ENCODE measurements at regions of chr17 and their contacts with region 1.

Region 1: DNA sequence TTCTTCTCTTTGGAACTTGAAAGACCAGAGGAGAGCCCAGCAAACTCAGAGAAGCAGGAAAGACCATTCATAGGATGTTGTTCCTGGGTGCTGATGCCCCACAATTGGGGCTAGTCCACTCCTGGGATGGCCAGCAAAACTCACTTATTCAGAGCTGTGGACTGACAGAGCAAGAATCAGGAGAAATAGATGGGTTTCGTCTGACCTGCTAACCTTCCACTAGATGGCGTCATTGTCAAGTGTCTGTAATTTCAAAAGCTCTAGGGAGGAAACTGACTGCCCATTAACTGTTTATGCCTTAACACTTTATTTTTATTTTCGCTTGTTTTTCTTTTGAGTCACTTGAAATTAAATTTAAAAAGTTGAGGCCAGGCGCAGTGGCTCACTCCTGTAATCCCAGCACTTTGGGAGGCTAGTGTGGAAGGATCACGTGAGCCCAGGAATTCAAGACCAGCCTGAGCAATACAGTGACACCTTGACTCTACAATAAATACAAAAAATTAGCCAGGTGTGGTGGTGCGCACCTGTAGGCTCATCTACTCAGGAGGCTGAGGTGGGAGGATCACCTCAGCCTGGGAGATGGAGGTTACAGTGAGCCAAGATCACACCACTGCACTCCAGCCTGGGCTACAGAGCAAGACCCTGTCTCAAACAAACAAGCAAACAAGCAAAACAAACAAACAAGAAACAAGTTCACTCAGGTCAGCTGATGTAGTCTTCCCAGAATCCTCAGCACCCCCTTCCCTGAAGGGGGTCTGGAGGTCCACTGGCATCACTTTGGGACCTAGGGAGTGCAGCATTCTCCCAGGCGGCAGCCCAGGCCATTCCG is 28.6 kb upstream of the MILR1 start:
- DNase-seq: peak; percentile 46
- ATAC-seq: peak; percentile 81
- H3K4me3 Mint-ChIP-seq: no peak overlapping the region
- H3K27ac Mint-ChIP-seq: no peak overlapping the region
- H3K4me1 Mint-ChIP-seq: peaks cover 9% of the 10 kb centered on the region
- H3K27me3 Mint-ChIP-seq: peaks cover 11% of the 10 kb centered on the region

Region 2: DNA sequence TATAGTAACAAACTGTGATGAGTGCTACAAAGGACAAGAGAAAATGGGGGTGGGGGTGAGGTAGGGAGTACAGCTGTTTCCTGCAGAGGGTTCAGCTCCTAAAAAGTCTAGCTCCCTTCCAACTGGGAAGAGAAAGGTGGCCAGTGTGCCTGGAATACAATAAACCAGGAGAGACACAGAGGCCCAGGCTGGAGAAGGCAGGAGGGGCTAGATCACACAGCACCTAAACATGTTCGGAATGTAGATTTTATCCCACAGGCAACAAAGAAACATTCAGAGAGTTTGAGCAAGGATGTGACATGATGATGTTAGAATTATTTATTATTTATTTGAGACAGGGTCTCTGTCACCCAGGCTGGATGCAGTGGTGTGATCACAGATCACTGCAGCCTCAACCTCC is 167.5 kb before region 1 on chr17:
- CTCF ChIA-PET with region 1: no interaction called
- DNase-seq: no peak
- ATAC-seq: no peak
- H3K4me3 Mint-ChIP-seq: no peak overlapping the region
- H3K27ac Mint-ChIP-seq: no peak overlapping the region
- H3K4me1 Mint-ChIP-seq: no peaks in the 10 kb centered on the region
- H3K27me3 Mint-ChIP-seq: no peaks in the 10 kb centered on the region

Region 3: DNA sequence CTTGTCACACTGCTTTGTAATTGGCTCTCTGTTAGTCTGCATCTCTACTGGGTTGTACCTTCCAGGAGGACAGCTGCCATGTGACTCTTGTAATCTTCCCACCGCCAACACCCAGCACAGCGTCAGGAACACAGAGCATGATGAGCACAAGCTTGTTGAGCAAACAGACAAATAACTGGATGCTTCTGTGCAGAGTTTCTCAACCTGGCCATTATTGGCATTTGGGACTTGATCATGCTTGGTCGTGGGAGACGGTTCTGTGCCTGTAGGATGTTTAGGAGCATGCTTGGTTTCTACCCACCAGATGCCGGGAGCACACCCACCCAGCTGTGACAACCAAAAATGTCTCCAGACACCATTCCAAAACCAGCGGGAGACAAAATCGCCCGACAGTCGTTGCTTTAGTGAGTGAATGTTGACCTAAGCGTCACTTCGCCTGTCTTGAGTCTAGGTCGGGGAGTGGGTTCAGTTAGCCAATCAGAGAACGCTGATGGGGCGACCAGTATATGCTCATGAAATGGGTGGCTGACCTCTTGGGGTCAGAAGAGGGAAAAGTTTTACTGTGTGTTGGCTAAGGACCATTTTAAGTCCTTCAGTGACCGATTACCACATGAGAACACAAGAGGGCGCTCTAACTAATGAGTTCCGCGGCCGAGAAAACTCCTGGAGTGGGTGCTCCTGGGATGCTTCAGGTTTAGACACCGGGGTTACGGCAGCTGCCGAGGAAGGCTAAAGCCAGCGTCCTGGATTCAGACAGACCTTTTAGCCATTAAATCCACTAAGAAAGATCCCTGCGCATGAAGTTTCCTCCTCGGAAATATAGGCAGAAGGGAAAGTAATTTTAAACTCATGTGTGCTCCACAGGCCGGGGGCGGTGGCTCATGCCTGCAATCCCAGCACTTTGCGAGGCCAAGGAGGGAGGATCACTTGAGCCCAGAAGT is 99.5 kb before region 1 on chr17:
- CTCF ChIA-PET with region 1: interaction called, 362 read pairs
- DNase-seq: peak; percentile 69
- ATAC-seq: peak; percentile 72
- H3K4me3 Mint-ChIP-seq: no peak overlapping the region
- H3K27ac Mint-ChIP-seq: no peak overlapping the region
- H3K4me1 Mint-ChIP-seq: peaks cover 3% of the 10 kb centered on the region
- H3K27me3 Mint-ChIP-seq: peaks cover 29% of the 10 kb centered on the region

Region 4: DNA sequence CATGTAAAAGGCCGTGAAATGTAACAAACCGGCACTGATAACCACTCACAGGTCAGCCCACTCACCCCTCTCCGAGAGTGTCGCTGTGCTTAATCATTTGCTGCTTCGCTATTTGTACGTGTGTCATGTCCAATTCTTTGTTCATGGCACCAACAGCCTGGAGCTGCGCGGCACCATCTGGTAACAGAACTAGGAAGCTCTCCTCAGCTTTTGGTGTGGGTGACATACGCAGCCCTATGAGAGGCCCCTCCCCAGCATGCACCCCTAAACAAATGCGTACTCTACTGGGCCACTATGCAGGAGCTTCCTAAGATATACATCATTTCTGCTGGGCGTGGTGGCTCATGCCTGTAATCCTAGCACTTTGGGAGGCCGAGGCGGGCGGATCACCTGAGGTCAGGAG is 27.4 kb before region 1 on chr17:
- CTCF ChIA-PET with region 1: interaction called, 20 read pairs
- DNase-seq: peak; percentile 68
- ATAC-seq: peak; percentile 64
- H3K4me3 Mint-ChIP-seq: peak overlapping the region; percentile 76
- H3K27ac Mint-ChIP-seq: peak overlapping the region; percentile 92
- H3K4me1 Mint-ChIP-seq: peaks cover 57% of the 10 kb centered on the region
- H3K27me3 Mint-ChIP-seq: no peaks in the 10 kb centered on the region

Region 5: GRCh38 chr17:64459284-64459747 is 39.0 kb after region 1 on chr17:
- CTCF ChIA-PET with region 1: interaction called, 25 read pairs
- DNase-seq: no peak
- ATAC-seq: no peak
- H3K4me3 Mint-ChIP-seq: no peak overlapping the region
- H3K27ac Mint-ChIP-seq: no peak overlapping the region
- H3K4me1 Mint-ChIP-seq: peaks cover 14% of the 10 kb centered on the region
- H3K27me3 Mint-ChIP-seq: peaks cover 3% of the 10 kb centered on the region

Region 6: DNA sequence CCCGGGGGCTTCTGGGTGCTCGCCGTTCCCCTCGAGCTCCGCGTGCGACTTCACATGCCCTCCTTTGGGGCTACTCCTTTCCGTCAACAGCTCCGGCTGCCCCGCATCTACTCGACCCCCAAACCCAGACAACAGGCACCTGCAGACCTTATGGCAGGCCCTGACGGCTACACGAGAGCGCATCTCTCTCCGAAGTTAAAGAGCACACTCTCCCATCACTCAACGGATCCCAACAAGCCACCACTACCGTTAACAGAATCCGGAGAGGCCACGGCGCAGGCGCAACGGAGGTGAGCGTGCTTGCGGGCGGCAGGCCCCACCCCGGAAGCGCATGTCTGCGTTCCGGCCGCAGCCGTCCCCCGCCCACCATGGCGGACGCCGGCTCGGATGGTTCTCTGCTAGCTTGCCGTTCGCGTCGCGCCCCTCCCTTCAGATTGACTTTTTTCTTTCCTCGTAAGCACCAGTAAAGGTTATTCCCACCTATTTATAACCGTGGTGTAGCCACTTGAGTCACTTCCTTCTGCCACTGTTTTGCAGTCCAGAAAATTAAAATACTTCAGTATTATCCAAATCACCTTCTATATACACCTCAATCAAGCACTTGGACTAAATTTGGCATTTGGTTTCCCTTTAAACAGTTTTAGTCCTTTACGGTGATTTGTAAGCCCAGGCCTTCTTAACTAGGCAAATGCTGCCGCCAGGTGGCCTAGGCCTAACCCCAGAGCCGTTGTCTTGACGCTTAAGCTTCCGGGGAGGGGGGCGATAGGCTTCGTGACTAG is 76.6 kb after region 1 on chr17 and contains the start of gene POLG2:
- CTCF ChIA-PET with region 1: interaction called, 308 read pairs
- DNase-seq: peak; percentile 97
- ATAC-seq: peak; percentile 78
- H3K4me3 Mint-ChIP-seq: peak within 1 kb of the TSS; percentile 96
- H3K27ac Mint-ChIP-seq: peak within 1 kb of the TSS; percentile 95
- H3K4me1 Mint-ChIP-seq: peaks cover 76% of the 10 kb centered on the region
- H3K27me3 Mint-ChIP-seq: no peaks in the 10 kb centered on the region
- total RNA-seq, gene POLG2: 36.0 to 47.3 TPM

Region 7: GRCh38 chr17:64599187-64599676 is 178.9 kb after region 1 on chr17:
- CTCF ChIA-PET with region 1: interaction called, 21 read pairs
- DNase-seq: peak; percentile 89
- ATAC-seq: peak; percentile 99
- H3K4me3 Mint-ChIP-seq: peak overlapping the region; percentile 62
- H3K27ac Mint-ChIP-seq: peak overlapping the region; percentile 84
- H3K4me1 Mint-ChIP-seq: peaks cover 33% of the 10 kb centered on the region
- H3K27me3 Mint-ChIP-seq: no peaks in the 10 kb centered on the region

Region 8: GRCh38 chr17:64635647-64636307 is 215.4 kb after region 1 on chr17:
- CTCF ChIA-PET with region 1: no interaction called
- DNase-seq: no peak
- ATAC-seq: peak; percentile 74
- H3K4me3 Mint-ChIP-seq: no peak overlapping the region
- H3K27ac Mint-ChIP-seq: peak overlapping the region; percentile 89
- H3K4me1 Mint-ChIP-seq: peaks cover 43% of the 10 kb centered on the region
- H3K27me3 Mint-ChIP-seq: no peaks in the 10 kb centered on the region